Transverse colon (tissue), 4 donors: ENCODE measurements at regions of chr1 and their contacts with region 1.

Region 1: DNA sequence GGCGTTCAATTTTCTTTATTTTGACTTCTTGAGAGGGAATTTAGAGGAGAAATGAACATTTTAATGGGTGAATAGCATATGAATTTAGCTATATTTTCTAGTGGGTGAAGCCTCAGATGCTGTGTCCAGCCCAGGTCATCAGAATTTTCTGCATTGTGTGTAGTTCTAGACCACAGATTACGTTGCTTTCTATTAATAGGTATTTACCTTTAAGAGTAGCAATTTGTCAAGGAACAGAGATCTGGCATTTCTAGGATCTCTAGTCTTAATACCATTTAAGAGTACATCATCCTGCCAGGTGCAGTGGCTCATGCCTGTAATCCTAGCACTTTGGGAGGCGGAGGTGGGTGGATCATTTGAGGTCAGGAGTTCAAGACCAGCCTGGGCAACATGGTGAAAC is 20.7 kb downstream of the TDRD5 start:
- DNase-seq: no peak
- H3K4me3 ChIP-seq: no peak overlapping the region
- H3K27ac ChIP-seq: no peak overlapping the region
- H3K4me1 ChIP-seq: no peaks in the 10 kb centered on the region
- H3K27me3 ChIP-seq: peaks cover 3% of the 10 kb centered on the region
- CTCF ChIP-seq: no peak
- EP300 ChIP-seq: no peak
- POLR2A ChIP-seq: no peak

Region 2: GRCh38 chr1:178143730-178144690 is 1468.4 kb before region 1 on chr1:
- in situ Hi-C with region 1: no loop called
- intact Hi-C with region 1: no loop called
- DNase-seq: no peak
- H3K4me3 ChIP-seq: no peak overlapping the region
- H3K27ac ChIP-seq: no peak overlapping the region
- H3K4me1 ChIP-seq: peaks cover 0 to 5% (median 0%) of the 10 kb centered on the region in 4 donors
- H3K27me3 ChIP-seq: no peaks in the 10 kb centered on the region
- CTCF ChIP-seq: no peak
- EP300 ChIP-seq: no peak
- POLR2A ChIP-seq: no peak

Region 3: GRCh38 chr1:179601093-179601492 is 11.3 kb before region 1 on chr1:
- in situ Hi-C with region 1: no loop called
- intact Hi-C with region 1: loop called (anchors 1 kb)
- DNase-seq: no peak
- H3K4me3 ChIP-seq: no peak overlapping the region
- H3K27ac ChIP-seq: no peak overlapping the region
- H3K4me1 ChIP-seq: no peaks in the 10 kb centered on the region
- H3K27me3 ChIP-seq: no peaks in the 10 kb centered on the region
- CTCF ChIP-seq: no peak
- EP300 ChIP-seq: no peak
- POLR2A ChIP-seq: no peak

Region 4: DNA sequence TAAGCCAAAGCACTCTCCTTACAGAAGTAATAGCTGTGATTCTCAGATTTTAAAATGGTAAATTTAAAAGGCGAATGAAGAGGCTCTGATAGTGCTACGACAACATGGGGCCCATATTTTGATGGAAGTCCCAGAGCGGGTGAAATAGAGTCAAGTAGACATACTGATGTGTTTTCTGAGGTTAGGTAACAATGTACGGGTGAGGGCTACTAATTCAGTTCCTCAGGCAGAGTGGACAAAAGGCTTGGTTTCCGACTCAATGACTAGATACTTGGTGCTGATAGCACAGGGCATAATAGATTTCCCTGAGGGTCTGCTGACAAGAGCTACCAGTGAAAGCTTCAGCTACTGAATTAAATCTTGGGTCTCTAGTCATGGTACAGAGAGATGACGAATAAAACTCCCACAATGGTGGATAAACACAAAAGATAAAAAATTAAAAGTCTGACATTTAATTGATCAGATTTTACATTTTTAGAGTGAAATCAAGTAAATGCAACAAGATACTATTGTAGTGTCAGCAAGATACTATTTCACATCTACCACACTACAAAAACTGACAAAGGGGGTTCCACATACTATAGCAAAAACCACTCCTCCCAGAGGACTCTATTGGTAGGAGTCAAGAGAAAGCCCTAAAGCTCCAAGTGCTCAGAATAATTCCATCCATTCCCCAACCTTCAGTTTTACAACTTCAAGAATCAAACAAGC is 254.9 kb after region 1 on chr1:
- in situ Hi-C with region 1: no loop called
- intact Hi-C with region 1: no loop called
- DNase-seq: no peak
- H3K4me3 ChIP-seq: no peak overlapping the region
- H3K27ac ChIP-seq: no peak overlapping the region
- H3K4me1 ChIP-seq: peaks cover 3 to 17% (median 6%) of the 10 kb centered on the region in 4 donors
- H3K27me3 ChIP-seq: no peaks in the 10 kb centered on the region
- CTCF ChIP-seq: no peak
- EP300 ChIP-seq: no peak
- POLR2A ChIP-seq: no peak